Activated CD8-positive, alpha-beta T cell treated with anti-CD3 and anti-CD28 coated beads, Interleukin-2, amount 10 ng/mL, durations not matched to agents 7 days and 5 days (primary cell): ENCODE measurements at regions of chr11 and their contacts with region 1.

Region 1: DNA sequence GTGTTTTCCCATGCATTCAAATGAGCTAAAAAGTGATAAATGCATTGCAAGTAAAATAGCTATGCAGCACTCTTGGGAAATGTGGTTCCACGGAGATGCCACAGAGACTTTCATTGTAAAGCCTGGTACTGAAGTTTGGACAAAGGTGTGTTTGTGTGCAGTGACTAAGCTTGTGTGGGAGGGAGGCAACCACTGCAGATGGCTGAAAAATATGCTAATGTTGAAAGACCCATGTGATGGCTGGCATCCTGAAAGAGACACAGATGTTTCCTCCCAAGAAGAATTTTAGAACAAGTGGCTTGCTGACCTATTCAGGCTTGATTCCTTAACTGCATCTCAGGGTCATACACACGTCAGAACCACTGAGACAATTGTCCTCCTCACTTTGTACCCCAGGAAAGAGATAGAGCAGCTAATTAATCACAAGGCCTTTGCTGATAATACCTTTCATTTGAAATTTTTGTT is 73.8 kb downstream of the FAM76B start:
- DNase-seq: peak; percentile 34
- ATAC-seq: peak; percentile 70
- H3K4me3 Mint-ChIP-seq: no peak overlapping the region
- H3K27ac Mint-ChIP-seq: no peak overlapping the region
- H3K4me1 Mint-ChIP-seq: peaks cover 24% of the 10 kb centered on the region
- H3K27me3 Mint-ChIP-seq: no peaks in the 10 kb centered on the region

Region 2: DNA sequence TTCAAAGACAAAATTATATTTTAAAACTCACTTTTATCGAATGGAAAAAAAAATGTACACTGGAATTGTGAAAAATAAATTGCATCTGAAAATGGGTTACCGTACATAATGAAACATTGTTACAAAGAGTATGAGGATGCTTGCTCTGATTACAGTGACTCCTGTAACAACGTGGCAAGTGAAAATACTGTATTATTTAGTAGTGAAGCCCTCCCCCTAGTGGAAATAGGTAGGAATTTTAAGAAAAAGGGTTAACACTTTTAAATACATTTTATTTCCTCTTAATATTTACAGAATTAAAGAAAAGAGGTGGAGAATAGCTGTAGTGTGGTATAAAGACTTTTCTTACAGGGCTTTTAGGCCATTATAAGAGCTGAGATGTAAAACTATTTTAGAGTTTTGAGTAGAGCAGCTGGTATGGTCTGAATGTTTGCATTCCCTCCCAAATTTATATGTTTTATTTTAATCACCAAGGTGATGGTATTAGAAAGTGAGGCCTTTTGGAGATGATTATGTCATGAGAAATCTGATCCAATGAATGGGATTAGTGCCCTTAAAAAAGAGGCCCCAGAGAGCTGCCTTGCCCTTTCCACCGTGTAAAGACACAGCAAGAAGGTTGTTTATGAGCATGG is 48.6 kb after region 1 on chr11:
- CTCF ChIA-PET with region 1: interaction called, 10 read pairs
- POLR2A ChIA-PET with region 1: no interaction called
- DNase-seq: no peak
- ATAC-seq: peak; percentile 84
- H3K4me3 Mint-ChIP-seq: no peak overlapping the region
- H3K27ac Mint-ChIP-seq: no peak overlapping the region
- H3K4me1 Mint-ChIP-seq: no peaks in the 10 kb centered on the region
- H3K27me3 Mint-ChIP-seq: peaks cover 3% of the 10 kb centered on the region